ENCODE measurements at regions of chr3 and their contacts with region 1.

Region 1: GRCh38 chr3:112734718-112735350 is 93.9 kb upstream of the CCDC80 start:
- DNase-seq: peak; percentile 90
- H3K4me3 Mint-ChIP-seq: no peak overlapping the region
- H3K27ac Mint-ChIP-seq: no peak overlapping the region
- H3K4me1 Mint-ChIP-seq: peaks cover 42% of the 10 kb centered on the region
- H3K27me3 Mint-ChIP-seq: no peaks in the 10 kb centered on the region

Region 2: GRCh38 chr3:112629425-112629824 is 105.4 kb before region 1 on chr3:
- intact Hi-C with region 1: no loop called
- DNase-seq: peak; percentile 69
- H3K4me3 Mint-ChIP-seq: no peak overlapping the region
- H3K27ac Mint-ChIP-seq: no peak overlapping the region
- H3K4me1 Mint-ChIP-seq: peaks cover 3% of the 10 kb centered on the region
- H3K27me3 Mint-ChIP-seq: peaks cover 11% of the 10 kb centered on the region

Region 3: DNA sequence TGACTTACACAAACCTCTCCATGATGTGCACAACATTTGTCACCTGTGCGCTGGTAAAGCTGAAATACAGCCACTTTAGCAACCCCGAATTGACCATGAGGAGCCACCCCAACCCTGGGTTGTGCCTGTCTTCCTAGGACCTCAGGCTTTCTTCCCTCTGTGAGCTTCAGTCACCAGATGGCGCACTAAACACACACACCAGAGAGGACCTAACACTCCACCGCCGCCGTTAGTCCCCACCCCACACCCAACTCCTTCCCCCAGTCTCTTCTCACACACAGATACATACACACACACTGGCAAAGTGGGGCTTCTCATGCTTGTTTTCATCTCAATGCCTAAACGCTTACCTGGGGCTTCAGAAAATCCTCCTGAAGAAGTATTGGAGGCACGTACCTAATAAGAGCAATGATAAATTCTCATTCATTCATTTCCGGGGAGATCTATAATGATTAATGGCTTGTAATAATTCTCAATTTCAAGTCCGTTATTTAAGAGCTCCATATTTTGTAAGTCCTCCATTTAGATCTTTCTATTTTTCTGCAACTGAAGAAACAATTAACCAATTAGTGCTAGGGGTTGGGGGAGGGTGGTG is 91.8 kb before region 1 on chr3:
- intact Hi-C with region 1: loop called (anchors 2 kb)
- DNase-seq: peak; percentile 94
- H3K4me3 Mint-ChIP-seq: peak overlapping the region; percentile 78
- H3K27ac Mint-ChIP-seq: peak overlapping the region; percentile 34
- H3K4me1 Mint-ChIP-seq: peaks cover 21% of the 10 kb centered on the region
- H3K27me3 Mint-ChIP-seq: peaks cover 11% of the 10 kb centered on the region

Region 4: DNA sequence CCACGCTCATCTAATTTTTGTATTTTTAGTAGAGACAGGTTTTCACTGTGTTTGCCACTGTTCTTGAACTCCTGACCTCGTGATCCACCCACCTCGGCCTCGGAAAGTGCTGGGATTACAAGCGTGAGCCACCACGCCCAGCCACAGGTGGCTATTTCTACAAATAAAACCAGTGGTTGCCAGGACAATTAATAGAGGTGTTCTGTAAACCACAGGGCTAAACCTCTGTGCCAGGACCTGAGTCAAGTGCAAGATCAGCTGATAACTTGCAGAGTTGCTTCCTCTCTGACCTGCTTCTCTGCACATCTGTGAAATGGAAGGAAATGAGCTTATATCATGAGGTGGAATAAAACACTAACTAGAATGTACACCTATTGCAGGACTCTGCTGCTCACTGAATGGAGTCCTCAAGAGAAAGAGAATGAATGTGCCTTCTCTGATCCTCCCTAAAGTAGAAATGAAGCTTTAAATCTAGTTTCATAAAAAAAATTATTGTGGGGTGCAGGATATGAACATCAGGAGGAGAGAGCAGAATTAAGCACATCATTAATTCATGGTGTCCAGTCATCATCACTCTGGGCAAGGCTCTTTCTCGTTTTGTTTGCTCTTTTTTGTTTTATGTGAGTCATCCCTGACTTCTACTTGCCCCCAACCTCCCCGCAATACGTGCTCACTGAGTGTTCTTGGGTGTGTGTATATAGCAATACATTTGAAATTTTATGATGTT is 39.2 kb after region 1 on chr3:
- intact Hi-C with region 1: loop called (anchors 5 kb)
- DNase-seq: peak; percentile 62
- H3K4me3 Mint-ChIP-seq: no peak overlapping the region
- H3K27ac Mint-ChIP-seq: no peak overlapping the region
- H3K4me1 Mint-ChIP-seq: peaks cover 23% of the 10 kb centered on the region
- H3K27me3 Mint-ChIP-seq: peaks cover 3% of the 10 kb centered on the region

Region 5: GRCh38 chr3:112858410-112859069 is 123.7 kb after region 1 on chr3:
- intact Hi-C with region 1: loop called (anchors 5 kb)
- DNase-seq: no peak
- H3K4me3 Mint-ChIP-seq: no peak overlapping the region
- H3K27ac Mint-ChIP-seq: peak overlapping the region; percentile 69
- H3K4me1 Mint-ChIP-seq: peaks cover 20% of the 10 kb centered on the region
- H3K27me3 Mint-ChIP-seq: no peaks in the 10 kb centered on the region

Region 6: DNA sequence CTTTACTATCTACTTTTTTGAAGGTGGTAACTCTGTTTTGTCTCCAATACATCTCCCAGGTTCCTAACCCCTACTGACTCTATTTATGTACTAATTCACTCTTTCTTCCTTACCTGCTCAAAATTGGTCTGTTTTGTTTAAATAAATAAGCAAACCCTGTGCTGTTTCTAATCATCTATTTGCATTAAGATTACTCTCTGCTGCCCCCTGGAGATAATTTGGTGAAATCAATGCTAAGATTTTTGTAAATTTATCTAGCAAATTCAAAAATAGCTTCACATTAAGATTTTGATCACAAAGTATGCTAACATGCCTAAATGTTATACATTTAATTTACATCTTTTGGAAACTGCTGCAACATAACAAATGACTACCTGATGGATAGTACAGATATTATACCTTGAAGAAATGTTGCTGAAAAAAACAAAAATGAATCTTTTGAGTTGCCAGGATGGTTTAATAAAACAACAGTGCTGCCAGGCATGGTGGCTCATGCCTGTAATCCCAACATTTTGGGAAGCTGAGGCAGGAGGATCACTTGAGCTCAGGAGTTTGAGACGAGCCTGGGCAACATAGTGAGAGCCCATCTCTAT is 244.5 kb after region 1 on chr3:
- intact Hi-C with region 1: loop called (anchors 1 kb)
- DNase-seq: peak; percentile 76
- H3K4me3 Mint-ChIP-seq: no peak overlapping the region
- H3K27ac Mint-ChIP-seq: peak overlapping the region; percentile 7
- H3K4me1 Mint-ChIP-seq: peaks cover 46% of the 10 kb centered on the region
- H3K27me3 Mint-ChIP-seq: peaks cover 4% of the 10 kb centered on the region

Region 7: GRCh38 chr3:113287803-113288648 is 553.2 kb after region 1 on chr3:
- intact Hi-C with region 1: loop called (anchors 10 kb)
- DNase-seq: peak; percentile 86
- H3K4me3 Mint-ChIP-seq: no peak overlapping the region
- H3K27ac Mint-ChIP-seq: no peak overlapping the region
- H3K4me1 Mint-ChIP-seq: peaks cover 4% of the 10 kb centered on the region
- H3K27me3 Mint-ChIP-seq: no peaks in the 10 kb centered on the region